HCT116 (cell line): ENCODE measurements at regions of chr1 and their contacts with region 1.

Region 1: GRCh38 chr1:5514519-5515183 is 477.6 kb downstream of the NPHP4 start:
- DNase-seq: peak; percentile 16
- ATAC-seq: peak; percentile 86
- H3K4me3 ChIP-seq: no peak overlapping the region
- H3K27ac ChIP-seq: no peak overlapping the region
- H3K4me1 ChIP-seq: no peaks in the 10 kb centered on the region
- H3K27me3 ChIP-seq: peaks cover 14% of the 10 kb centered on the region
- CTCF ChIP-seq: peak; percentile 60 to 100 (median 99); a peak in 5 of 6 replicates
- POLR2A ChIP-seq: no peak
- RAD21 ChIP-seq: peak; percentile 66

Region 2: GRCh38 chr1:4796161-4797015 is 718.3 kb before region 1 on chr1:
- CTCF ChIA-PET with region 1: no interaction called
- POLR2A ChIA-PET with region 1: no interaction called
- RAD21 ChIA-PET with region 1: no interaction called
- intact Hi-C with region 1: no loop called
- DNase-seq: no peak
- ATAC-seq: no peak
- H3K4me3 ChIP-seq: no peak overlapping the region
- H3K27ac ChIP-seq: no peak overlapping the region
- H3K4me1 ChIP-seq: no peaks in the 10 kb centered on the region
- H3K27me3 ChIP-seq: no peaks in the 10 kb centered on the region
- CTCF ChIP-seq: no peak
- POLR2A ChIP-seq: no peak
- RAD21 ChIP-seq: no peak

Region 3: DNA sequence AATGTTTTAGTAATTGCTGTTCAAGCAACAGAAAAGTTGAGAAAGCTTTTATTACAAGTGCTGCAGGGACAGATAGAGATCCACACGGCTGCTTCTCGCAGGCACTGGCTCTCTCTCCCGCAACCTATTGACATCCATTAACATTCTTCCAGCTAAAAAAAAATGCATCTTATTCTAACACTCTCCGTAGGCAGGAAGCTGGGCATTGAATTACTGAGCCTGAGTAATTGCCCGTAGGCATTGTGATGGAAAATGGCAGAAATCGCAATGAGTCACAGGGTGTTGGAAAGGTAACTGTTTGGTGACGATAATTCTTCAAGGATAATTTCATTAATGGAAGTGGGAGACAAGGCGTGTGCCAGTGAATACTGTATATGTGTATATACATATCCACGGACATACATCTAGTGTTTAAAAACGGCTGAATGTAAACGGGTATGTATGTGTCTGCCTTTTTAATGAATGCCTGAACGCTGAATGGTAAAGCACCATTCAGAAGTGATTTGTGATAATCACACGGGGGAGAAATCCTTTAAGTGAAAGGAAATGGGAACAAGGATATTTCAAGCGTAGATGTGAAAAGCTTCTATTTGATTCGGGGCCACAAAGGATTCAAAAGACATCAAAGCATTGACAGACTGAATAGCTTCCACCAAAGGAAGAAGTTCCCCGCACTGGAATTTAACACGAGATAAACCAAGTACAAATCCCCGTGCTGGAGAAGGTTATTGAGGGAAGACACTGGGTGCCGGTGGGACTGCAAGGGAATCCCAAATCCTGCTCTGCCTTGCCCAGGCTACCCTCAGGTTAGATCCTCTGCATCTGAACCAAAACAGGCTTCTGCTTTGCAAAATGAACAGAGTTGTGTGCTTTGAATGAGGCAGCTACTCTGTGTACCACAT is 89.6 kb before region 1 on chr1:
- CTCF ChIA-PET with region 1: no interaction called
- POLR2A ChIA-PET with region 1: no interaction called
- RAD21 ChIA-PET with region 1: no interaction called
- intact Hi-C with region 1: no loop called
- DNase-seq: no peak
- ATAC-seq: no peak
- H3K4me3 ChIP-seq: no peak overlapping the region
- H3K27ac ChIP-seq: no peak overlapping the region
- H3K4me1 ChIP-seq: peaks cover 0 to 10% of the 10 kb centered on the region in 2 experiments; a peak in 1 of 4 replicates
- H3K27me3 ChIP-seq: peaks cover 7% of the 10 kb centered on the region; the same call in 1 of the 2 replicates
- CTCF ChIP-seq: no peak
- POLR2A ChIP-seq: no peak
- RAD21 ChIP-seq: no peak

Region 4: GRCh38 chr1:5620990-5621389 is 106.3 kb after region 1 on chr1:
- CTCF ChIA-PET with region 1: interaction called, 6 read pairs
- POLR2A ChIA-PET with region 1: no interaction called
- RAD21 ChIA-PET with region 1: no interaction called
- intact Hi-C with region 1: loop called (anchors 1 kb)
- DNase-seq: peak; percentile 15
- ATAC-seq: peak; percentile 91
- H3K4me3 ChIP-seq: no peak overlapping the region
- H3K27ac ChIP-seq: no peak overlapping the region
- H3K4me1 ChIP-seq: no peaks in the 10 kb centered on the region
- H3K27me3 ChIP-seq: peaks cover 22% of the 10 kb centered on the region; the same call in 1 of the 2 replicates
- CTCF ChIP-seq: peak; percentile 57 to 79 (median 74); a peak in 5 of 6 replicates
- POLR2A ChIP-seq: no peak
- RAD21 ChIP-seq: peak; percentile 75

Region 5: GRCh38 chr1:5915587-5916571 is 401.2 kb after region 1 on chr1:
- CTCF ChIA-PET with region 1: no interaction called
- POLR2A ChIA-PET with region 1: no interaction called
- RAD21 ChIA-PET with region 1: no interaction called
- intact Hi-C with region 1: loop called (anchors 1 kb)
- DNase-seq: peak; percentile 6
- ATAC-seq: peak; percentile 87
- H3K4me3 ChIP-seq: no peak overlapping the region
- H3K27ac ChIP-seq: no peak overlapping the region
- H3K4me1 ChIP-seq: peaks cover 5 to 6% of the 10 kb centered on the region in 2 experiments; a peak in 3 of 4 replicates
- H3K27me3 ChIP-seq: no peaks in the 10 kb centered on the region
- CTCF ChIP-seq: peak; percentile 40 to 82 (median 68); a peak in 5 of 6 replicates
- POLR2A ChIP-seq: no peak
- RAD21 ChIP-seq: peak; percentile 57; the same call in 1 of the 2 replicates

Region 6: GRCh38 chr1:5975133-5975880 is 460.7 kb after region 1 on chr1:
- CTCF ChIA-PET with region 1: interaction called, 3 read pairs
- POLR2A ChIA-PET with region 1: no interaction called
- RAD21 ChIA-PET with region 1: no interaction called
- intact Hi-C with region 1: loop called (anchors 1 kb)
- DNase-seq: no peak
- ATAC-seq: peak; percentile 84
- H3K4me3 ChIP-seq: no peak overlapping the region
- H3K27ac ChIP-seq: no peak overlapping the region
- H3K4me1 ChIP-seq: peaks cover 2 to 28% of the 10 kb centered on the region in 2 experiments; a peak in 3 of 4 replicates
- H3K27me3 ChIP-seq: no peaks in the 10 kb centered on the region
- CTCF ChIP-seq: peak; percentile 47 to 75 (median 72); a peak in 5 of 6 replicates
- POLR2A ChIP-seq: no peak
- RAD21 ChIP-seq: peak; percentile 73